Endothelial cell of umbilical vein (primary cell): ENCODE measurements at regions of chr19 and their contacts with region 1.

Region 1: DNA sequence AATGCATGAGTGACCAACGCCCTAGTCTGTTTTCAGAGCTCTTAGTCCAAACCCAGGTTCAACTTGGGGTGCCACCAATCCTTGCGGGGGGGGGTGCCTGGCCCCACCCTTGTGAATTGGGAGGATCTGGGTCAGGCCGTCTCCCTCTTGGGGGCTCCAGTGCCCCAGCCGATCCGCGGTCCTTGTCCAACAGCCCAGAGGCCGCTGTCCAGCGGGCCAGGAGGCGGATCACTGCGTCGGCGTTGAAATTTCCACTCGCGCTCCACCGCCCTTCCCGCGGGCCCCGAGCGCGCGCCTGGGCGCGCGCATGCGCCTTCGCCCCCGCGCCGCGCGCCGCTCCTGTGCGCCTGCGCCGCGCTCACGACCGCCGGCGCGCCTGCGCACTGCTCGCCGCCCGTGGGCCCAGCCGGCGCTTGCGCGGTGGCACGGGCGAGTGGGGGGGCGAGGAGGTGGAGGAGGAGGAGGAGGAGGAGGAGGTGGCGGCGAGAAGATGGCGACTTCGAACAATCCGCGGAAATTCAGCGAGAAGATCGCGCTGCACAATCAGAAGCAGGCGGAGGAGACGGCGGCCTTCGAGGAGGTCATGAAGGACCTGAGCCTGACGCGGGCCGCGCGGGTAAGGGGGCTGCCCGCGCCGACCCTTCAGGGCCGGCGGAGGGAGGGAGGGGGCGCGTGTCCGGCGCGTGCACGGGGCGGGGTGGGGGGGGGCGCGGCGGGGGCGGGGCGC is at the start of gene CRTC1:
- DNase-seq: peak; percentile 87
- H3K4me3 ChIP-seq: peak within 1 kb of the TSS in 2 of 3 experiments; percentile 65 to 88
- H3K27ac ChIP-seq: no peak within 1 kb of the TSS
- H3K4me1 ChIP-seq: peaks cover 10% of the 10 kb centered on the region
- H3K27me3 ChIP-seq: no peaks in the 10 kb centered on the region
- CTCF ChIP-seq: peak in 1 of 2 donors; percentile 7
- POLR2A ChIP-seq: peak; percentile 71
- total RNA-seq, gene CRTC1: 10.3 and 11.4 TPM in 2 replicates

Region 2: GRCh38 chr19:18612772-18613588 is 70.4 kb before region 1 on chr19 and contains the start of gene TMEM59L:
- CTCF ChIA-PET with region 1: no interaction called
- POLR2A ChIA-PET with region 1: no interaction called
- dilution Hi-C with region 1: no loop called
- intact Hi-C with region 1: no loop called
- DNase-seq: no peak
- H3K4me3 ChIP-seq: peak within 1 kb of the TSS in 1 of 3 experiments; percentile 28
- H3K27ac ChIP-seq: no peak within 1 kb of the TSS
- H3K4me1 ChIP-seq: peaks cover 16% of the 10 kb centered on the region
- H3K27me3 ChIP-seq: peaks cover 57 to 64% of the 10 kb centered on the region in 2 experiments
- CTCF ChIP-seq: no peak
- POLR2A ChIP-seq: no peak
- total RNA-seq, gene TMEM59L: 0.25 and 0.97 TPM in 2 replicates

Region 3: GRCh38 chr19:18831524-18832305 is 148.3 kb after region 1 on chr19 and contains the start of gene UPF1:
- CTCF ChIA-PET with region 1: no interaction called
- POLR2A ChIA-PET with region 1: no interaction called
- dilution Hi-C with region 1: no loop called
- intact Hi-C with region 1: loop called (anchors 2 kb)
- DNase-seq: peak; percentile 91
- H3K4me3 ChIP-seq: peak within 1 kb of the TSS; percentile 63 to 92 (median 86)
- H3K27ac ChIP-seq: peak within 1 kb of the TSS; percentile 81
- H3K4me1 ChIP-seq: peaks cover 17% of the 10 kb centered on the region
- H3K27me3 ChIP-seq: peaks cover 0 to 2% of the 10 kb centered on the region in 2 experiments
- CTCF ChIP-seq: no peak
- POLR2A ChIP-seq: peak; percentile 85
- total RNA-seq, gene UPF1: 68.2 and 69.1 TPM in 2 replicates